Naive thymus-derived CD8-positive, alpha-beta T cell (primary cell): ENCODE measurements at regions of chr17 and their contacts with region 1.

Region 1: GRCh38 chr17:50372758-50373556 is at the starts of genes EME1 and MRPL27:
- DNase-seq: peak; percentile 69 to 99 (median 84)
- ATAC-seq: peak; percentile 94 to 95
- H3K4me3 Mint-ChIP-seq: peak within 1 kb of the TSS; percentile 90 to 100 (median 98)
- H3K27ac Mint-ChIP-seq: peak within 1 kb of the TSS; percentile 99 to 100 (median 100)
- H3K4me1 Mint-ChIP-seq: peaks cover 17 to 30% (median 23%) of the 10 kb centered on the region in 4 donors
- H3K27me3 Mint-ChIP-seq: no peaks in the 10 kb centered on the region
- polyA plus RNA-seq, gene EME1: 0.38 TPM in 1 of 3 donors, not detected in the others
- polyA plus RNA-seq, gene MRPL27: 28.7 to 60.6 (median 45.7) TPM

Region 2: GRCh38 chr17:50297407-50297865 is 75.5 kb before region 1 on chr17:
- POLR2A ChIA-PET with region 1: no interaction called
- DNase-seq: peak; percentile 68 to 88 (median 76)
- ATAC-seq: peak; percentile 99 to 100
- H3K4me3 Mint-ChIP-seq: no peak overlapping the region
- H3K27ac Mint-ChIP-seq: no peak overlapping the region
- H3K4me1 Mint-ChIP-seq: no peaks in the 10 kb centered on the region
- H3K27me3 Mint-ChIP-seq: peaks cover 0 to 8% (median 5%) of the 10 kb centered on the region in 5 donors

Region 3: GRCh38 chr17:50361561-50362480 is 11.1 kb before region 1 on chr17:
- POLR2A ChIA-PET with region 1: interaction called, 17 read pairs
- DNase-seq: peak; percentile 32 to 77 (median 54)
- ATAC-seq: peak; percentile 89 to 94
- H3K4me3 Mint-ChIP-seq: peak overlapping the region in 9 of 10 donors; percentile 21 to 58 (median 47)
- H3K27ac Mint-ChIP-seq: peak overlapping the region; percentile 59 to 93 (median 84)
- H3K4me1 Mint-ChIP-seq: peaks cover 9 to 30% (median 12%) of the 10 kb centered on the region in 4 donors
- H3K27me3 Mint-ChIP-seq: no peaks in the 10 kb centered on the region